ENCODE measurements at regions of chr11 and their contacts with region 1.

Region 1: DNA sequence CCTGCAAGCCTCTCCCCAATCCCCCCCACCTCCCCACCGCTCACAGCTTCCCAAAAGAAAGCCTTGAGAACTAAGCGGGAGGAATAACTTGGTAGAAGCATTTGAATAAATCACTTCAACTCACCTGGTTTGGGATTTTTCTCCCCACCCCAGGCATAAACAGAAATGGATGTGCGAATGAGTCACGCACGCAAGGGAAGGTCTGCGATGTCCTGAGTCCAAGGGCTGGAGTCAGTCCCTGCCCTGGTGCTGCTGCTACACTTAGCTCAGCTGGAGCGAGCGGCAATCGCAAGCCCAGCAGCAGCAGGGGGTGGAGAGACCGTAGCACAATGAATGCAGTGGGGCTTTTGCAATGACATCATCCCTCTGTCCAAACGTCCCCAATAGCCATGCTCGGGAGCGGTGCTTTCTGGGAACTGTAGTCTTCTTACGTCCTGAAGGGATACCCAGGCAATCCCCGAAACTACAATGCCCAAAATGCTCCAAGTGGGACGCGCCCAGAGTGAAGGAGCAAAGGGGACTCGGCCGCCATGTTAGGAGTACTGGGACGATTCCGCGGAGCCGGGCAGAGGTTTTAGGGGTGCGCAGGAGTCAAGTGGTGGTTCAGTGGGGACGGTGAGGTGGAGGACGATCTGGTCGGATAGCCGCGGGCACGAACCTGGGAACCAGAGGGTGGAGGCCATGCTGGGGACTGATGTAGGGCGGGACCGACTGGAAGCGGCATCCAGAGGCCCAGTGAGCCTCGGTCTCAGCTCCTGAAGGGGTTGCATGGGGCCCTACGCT is at the start of gene RAB30:
- DNase-seq: peak; percentile 100
- H3K4me3 ChIP-seq: peak within 1 kb of the TSS; percentile 78 to 96 (median 93)
- H3K27ac ChIP-seq: peak within 1 kb of the TSS; percentile 75
- H3K4me1 ChIP-seq: peaks cover 36% of the 10 kb centered on the region
- H3K27me3 ChIP-seq: no peaks in the 10 kb centered on the region
- CTCF ChIP-seq: no peak
- POLR2A ChIP-seq: peak; percentile 97
- total RNA-seq, gene RAB30: 14.6 and 18.4 TPM in 2 replicates

Region 2: DNA sequence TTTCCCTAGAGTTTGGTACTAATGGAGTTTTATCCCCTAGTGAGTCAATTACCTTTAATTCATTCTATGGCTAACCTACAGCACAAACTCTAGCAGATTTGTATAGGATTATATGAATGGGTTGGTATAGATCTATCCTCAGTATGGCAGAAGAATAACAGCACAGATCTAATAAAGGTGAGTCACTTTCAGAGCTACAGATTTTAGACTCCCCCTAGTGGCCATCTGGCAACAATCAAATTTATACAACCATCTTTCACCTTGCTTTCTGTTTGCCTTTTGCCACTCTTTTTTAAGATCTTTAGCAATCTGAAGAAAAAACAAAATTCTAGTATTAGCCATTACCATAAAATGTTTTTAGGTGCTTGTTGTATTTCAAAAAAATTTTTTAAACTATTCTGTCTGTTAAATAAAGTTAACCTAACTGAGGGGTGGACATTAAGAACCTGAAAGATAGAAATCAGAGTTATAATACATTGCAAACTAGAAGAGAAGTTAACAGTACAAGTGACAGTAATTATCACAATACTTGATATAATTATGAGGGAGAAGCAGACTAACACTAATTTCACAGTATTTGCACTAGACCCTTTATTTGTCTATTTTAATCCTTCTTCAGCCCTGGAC is 144.4 kb before region 1 on chr11:
- CTCF ChIA-PET with region 1: interaction called, 10 read pairs
- POLR2A ChIA-PET with region 1: no interaction called
- dilution Hi-C with region 1: no loop called
- intact Hi-C with region 1: loop called (anchors 1 kb)
- DNase-seq: peak; percentile 59
- H3K4me3 ChIP-seq: no peak overlapping the region
- H3K27ac ChIP-seq: no peak overlapping the region
- H3K4me1 ChIP-seq: peaks cover 16% of the 10 kb centered on the region
- H3K27me3 ChIP-seq: no peaks in the 10 kb centered on the region
- CTCF ChIP-seq: peak; percentile 59 to 61
- POLR2A ChIP-seq: no peak

Region 3: DNA sequence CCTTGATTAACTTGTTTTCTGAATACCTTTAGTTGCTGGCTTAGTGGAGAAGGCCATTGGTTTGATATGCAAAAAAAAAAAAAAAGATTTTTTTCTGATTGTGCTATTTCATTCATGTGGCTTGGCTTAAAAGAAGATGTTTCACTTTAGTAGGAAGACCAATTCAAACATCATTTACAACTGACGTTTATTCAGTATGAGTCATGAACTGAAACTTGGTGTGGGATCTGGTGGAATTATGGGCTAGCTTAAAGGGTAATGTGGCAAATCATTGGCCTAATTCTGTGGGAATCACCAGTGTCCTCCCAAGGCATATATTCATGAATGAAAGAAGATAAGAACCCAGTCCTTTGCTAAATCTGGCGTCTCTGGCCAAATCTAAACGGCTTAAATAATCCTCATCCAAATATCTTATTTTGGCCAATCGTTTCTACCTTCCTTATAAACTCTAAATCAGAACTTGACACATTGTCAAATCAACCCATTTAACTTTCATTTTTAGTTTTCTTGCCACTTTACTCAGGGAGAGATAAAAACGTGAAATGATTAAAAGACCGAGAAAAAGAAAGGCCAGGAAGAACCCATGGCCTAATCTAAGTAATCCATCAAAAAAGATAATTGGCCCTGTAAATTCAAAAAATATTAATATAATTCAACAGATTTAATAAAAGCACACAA is 93.2 kb before region 1 on chr11:
- CTCF ChIA-PET with region 1: interaction called, 4 read pairs
- POLR2A ChIA-PET with region 1: no interaction called
- dilution Hi-C with region 1: no loop called
- intact Hi-C with region 1: loop called (anchors 1 kb)
- DNase-seq: no peak
- H3K4me3 ChIP-seq: no peak overlapping the region
- H3K27ac ChIP-seq: no peak overlapping the region
- H3K4me1 ChIP-seq: peaks cover 22% of the 10 kb centered on the region
- H3K27me3 ChIP-seq: no peaks in the 10 kb centered on the region
- CTCF ChIP-seq: no peak
- POLR2A ChIP-seq: no peak

Region 4: GRCh38 chr11:83007909-83008580 is 63.7 kb before region 1 on chr11:
- CTCF ChIA-PET with region 1: interaction called, 3 read pairs
- POLR2A ChIA-PET with region 1: interaction called, 3 read pairs
- dilution Hi-C with region 1: no loop called
- intact Hi-C with region 1: loop called (anchors 1 kb)
- DNase-seq: peak; percentile 94
- H3K4me3 ChIP-seq: no peak overlapping the region
- H3K27ac ChIP-seq: peak overlapping the region; percentile 68
- H3K4me1 ChIP-seq: peaks cover 40% of the 10 kb centered on the region
- H3K27me3 ChIP-seq: no peaks in the 10 kb centered on the region
- CTCF ChIP-seq: peak in 1 of 2 donors; percentile 6
- POLR2A ChIP-seq: peak; percentile 51

Region 5: DNA sequence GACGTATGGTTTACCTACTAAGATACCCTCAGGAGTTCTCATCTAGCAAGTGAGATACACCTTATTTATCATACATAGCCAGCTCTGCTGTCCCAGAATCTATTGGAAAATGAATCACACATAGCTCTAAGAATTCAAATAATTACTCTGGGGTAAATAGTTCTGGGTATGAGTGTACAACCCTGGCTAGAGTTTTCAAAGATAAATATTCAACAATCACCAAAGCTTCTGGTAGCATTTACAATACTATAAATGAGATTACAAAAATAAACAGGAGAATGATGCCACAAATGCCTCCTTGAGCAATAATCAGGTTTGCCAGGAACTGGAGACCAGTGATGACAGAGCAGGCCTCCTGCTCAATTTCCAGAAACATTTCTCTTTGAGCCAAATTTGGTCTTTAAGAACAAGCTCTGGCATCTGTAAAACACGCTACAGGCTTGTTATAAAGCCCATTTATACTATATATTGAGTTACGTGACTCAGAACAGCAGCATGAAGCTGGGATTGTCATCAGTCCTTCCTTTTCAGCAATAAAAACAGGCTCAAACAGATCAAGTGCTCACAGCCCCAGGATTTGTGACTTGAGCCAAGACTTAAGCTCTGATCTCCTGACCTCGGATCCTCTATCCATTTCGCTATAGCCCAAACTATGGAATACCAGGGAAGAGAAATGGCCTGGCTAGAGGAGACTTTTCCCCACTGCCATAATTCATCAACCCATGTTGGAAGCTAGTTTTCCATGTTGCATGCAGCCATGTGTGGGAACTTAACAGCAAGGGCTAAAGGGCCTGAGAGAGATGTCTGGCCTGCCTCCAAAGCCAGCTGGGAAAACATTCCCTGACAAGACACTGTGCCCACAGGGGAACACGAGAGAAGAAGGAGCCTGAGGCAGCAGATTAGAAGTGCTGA is 19.7 kb before region 1 on chr11:
- CTCF ChIA-PET with region 1: interaction called, 11 read pairs
- POLR2A ChIA-PET with region 1: interaction called, 8 read pairs
- dilution Hi-C with region 1: no loop called
- intact Hi-C with region 1: loop called (anchors 1 kb)
- DNase-seq: peak; percentile 94
- H3K4me3 ChIP-seq: no peak overlapping the region
- H3K27ac ChIP-seq: peak overlapping the region; percentile 88
- H3K4me1 ChIP-seq: peaks cover 59% of the 10 kb centered on the region
- H3K27me3 ChIP-seq: no peaks in the 10 kb centered on the region
- CTCF ChIP-seq: no peak
- POLR2A ChIP-seq: no peak

Region 6: DNA sequence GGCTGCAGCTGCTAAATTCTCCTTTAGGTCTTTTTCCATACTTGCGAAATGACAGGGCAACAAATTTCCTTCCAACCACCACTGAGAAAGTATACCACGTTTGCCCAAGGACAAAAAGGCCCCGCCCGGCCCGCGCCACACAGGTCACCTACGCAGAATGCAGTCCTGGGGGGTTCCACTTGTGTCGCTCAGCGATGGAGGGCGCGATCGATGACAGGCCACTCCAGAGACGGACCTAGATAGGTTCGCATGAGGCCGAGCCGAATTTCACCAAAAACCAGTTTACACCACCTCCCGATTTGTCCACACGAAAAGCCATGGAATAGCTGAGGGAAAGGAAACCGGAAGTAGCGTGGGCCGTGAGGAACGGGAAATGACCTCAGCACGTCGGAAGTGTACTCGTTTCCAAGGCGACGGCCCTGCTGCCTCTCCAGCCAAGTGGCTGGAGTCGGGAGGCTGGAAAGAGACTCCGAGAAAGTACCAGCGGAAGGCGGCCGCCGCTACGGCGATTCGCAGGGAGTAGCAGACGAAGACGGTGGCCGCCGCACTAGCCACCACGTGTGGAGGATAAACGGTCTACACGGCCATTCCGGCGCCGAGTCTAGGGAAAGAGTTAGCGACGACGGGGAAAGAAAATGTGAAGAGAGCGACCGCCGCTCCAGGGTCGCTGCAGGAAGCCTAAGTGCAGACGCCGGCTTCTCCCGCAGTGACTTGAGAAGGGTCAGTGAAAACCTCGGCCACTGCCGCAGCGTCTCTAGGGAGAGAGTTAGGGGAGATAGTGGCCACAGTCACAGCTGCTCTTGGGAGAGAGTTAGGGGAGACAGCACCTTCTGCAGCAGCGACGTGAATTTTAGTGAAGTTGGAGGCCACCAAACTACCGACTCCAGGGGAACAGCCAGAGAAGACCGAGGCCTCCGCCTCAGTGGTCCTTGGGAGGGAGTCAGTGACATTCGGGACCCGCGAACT is 121.8 kb after region 1 on chr11 and contains the start of gene ANKRD42:
- CTCF ChIA-PET with region 1: no interaction called
- POLR2A ChIA-PET with region 1: interaction called, 4 read pairs
- dilution Hi-C with region 1: no loop called
- intact Hi-C with region 1: loop called (anchors 1 kb)
- DNase-seq: peak; percentile 96
- H3K4me3 ChIP-seq: peak within 1 kb of the TSS; percentile 31 to 87 (median 83)
- H3K27ac ChIP-seq: peak within 1 kb of the TSS; percentile 72
- H3K4me1 ChIP-seq: peaks cover 17% of the 10 kb centered on the region
- H3K27me3 ChIP-seq: no peaks in the 10 kb centered on the region
- CTCF ChIP-seq: no peak
- POLR2A ChIP-seq: peak; percentile 92
- total RNA-seq, gene ANKRD42: 6.6 and 7.6 TPM in 2 replicates

Region 7: GRCh38 chr11:83220279-83220678 is 148.5 kb after region 1 on chr11:
- CTCF ChIA-PET with region 1: no interaction called
- POLR2A ChIA-PET with region 1: no interaction called
- dilution Hi-C with region 1: no loop called
- intact Hi-C with region 1: no loop called
- DNase-seq: no peak
- H3K4me3 ChIP-seq: no peak overlapping the region
- H3K27ac ChIP-seq: no peak overlapping the region
- H3K4me1 ChIP-seq: no peaks in the 10 kb centered on the region
- H3K27me3 ChIP-seq: no peaks in the 10 kb centered on the region
- CTCF ChIP-seq: no peak
- POLR2A ChIP-seq: no peak

Region 8: DNA sequence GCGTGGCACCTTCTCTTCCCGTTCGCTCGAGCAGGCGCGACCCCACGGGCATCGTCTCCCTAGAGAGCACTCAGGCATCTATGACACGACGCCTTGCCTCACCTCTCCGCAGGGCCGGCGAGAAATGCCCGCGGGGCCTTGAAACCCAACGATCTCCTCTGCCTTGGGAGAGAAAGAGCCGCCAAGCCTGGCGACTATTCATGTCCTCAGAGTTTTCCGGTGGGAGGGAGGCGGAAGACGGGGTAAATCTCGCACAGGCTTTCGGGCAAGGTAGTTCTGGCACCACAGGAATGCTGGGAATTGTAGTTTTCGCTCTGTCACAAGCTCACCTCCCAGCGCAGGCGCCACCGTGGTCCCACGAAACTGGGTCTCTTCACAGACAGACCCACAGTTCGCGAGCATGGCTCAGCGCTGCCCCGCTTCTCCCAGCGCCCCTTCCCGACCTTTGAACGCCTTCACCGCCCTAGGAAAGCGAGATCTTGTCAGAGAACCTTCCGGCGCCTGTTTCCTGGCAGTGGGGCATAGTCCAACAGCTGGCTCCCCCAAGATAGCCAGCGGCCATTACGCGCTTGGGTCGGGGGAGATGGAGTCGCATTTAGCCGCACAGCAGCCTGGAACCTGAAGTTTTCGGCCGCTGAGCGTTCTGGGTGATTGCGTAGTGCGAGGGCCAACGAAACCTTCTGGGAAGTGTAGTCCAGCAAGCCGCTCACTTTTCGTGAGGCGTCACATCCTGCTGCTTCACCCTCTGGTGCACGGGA is 214.2 kb after region 1 on chr11 and contains the start of gene CCDC90B:
- CTCF ChIA-PET with region 1: no interaction called
- POLR2A ChIA-PET with region 1: no interaction called
- dilution Hi-C with region 1: no loop called
- intact Hi-C with region 1: loop called (anchors 1 kb)
- DNase-seq: peak; percentile 98
- H3K4me3 ChIP-seq: peak within 1 kb of the TSS; percentile 47 to 100 (median 85)
- H3K27ac ChIP-seq: peak within 1 kb of the TSS; percentile 86
- H3K4me1 ChIP-seq: peaks cover 9% of the 10 kb centered on the region
- H3K27me3 ChIP-seq: peaks cover 0 to under 1% of the 10 kb centered on the region in 2 experiments
- CTCF ChIP-seq: peak; percentile 17 to 24
- POLR2A ChIP-seq: peak; percentile 92
- total RNA-seq, gene CCDC90B: 45.8 and 49.6 TPM in 2 replicates